ENCODE measurements at regions of chr14 and their contacts with region 1.

Region 1: DNA sequence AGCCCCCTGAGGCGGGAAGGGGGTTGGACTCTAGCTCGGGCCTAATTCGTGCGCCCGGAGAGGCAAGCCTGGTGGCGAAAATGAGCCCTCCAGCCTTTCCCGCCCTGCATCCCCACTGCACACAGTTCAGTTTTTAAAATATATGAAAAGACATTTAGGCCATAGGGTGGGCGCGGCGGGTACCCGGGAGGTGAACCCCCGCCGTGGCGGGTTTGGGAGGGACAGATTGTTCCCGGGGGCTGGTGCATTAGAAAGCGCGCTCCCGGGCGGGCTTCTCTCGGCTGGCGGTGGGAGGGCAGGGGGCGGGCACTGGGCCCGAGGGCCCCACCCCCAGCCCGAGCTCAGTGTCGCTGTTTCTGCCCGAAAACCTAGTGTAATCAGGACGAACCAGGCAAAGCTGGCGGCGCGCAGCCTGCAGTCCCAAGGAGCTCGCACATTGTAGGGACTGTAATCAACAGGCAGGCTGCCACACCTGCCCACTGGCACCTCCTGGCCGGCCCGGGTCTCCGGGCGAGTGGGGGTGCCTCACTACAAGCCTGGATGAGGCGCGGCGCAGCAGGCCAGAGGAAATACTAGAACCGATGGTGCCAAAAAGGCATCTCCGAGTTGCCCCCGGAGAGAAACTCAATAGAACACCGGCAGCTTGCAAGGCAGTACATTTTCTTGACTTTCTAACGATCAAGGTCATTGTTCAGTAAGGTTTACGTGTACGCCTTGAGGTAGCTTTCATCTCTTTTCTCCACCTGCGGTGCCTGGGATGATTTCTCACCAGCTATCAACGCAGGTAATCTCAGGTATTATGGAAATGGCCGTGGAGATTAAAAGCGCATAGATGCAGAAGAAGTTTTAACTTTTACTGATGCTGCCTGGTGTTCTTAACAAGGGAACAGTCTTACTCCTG is 764 bp upstream of the SPTB start:
- DNase-seq: peak; percentile 51 to 70
- H3K4me3 ChIP-seq: peak overlapping the region; percentile 61
- H3K4me3 Mint-ChIP-seq: peak overlapping the region; percentile 82
- H3K27ac Mint-ChIP-seq: no peak overlapping the region
- H3K4me1 ChIP-seq: no peaks in the 10 kb centered on the region
- H3K4me1 Mint-ChIP-seq: no peaks in the 10 kb centered on the region
- H3K27me3 ChIP-seq: 0 out of 2 replicates have a peak, but pooled peaks cover 1% of the 10 kb centered on the region
- H3K27me3 Mint-ChIP-seq: peaks cover 31% of the 10 kb centered on the region
- CTCF ChIP-seq: peak in 1 of 2 experiments; percentile 11

Region 2: DNA sequence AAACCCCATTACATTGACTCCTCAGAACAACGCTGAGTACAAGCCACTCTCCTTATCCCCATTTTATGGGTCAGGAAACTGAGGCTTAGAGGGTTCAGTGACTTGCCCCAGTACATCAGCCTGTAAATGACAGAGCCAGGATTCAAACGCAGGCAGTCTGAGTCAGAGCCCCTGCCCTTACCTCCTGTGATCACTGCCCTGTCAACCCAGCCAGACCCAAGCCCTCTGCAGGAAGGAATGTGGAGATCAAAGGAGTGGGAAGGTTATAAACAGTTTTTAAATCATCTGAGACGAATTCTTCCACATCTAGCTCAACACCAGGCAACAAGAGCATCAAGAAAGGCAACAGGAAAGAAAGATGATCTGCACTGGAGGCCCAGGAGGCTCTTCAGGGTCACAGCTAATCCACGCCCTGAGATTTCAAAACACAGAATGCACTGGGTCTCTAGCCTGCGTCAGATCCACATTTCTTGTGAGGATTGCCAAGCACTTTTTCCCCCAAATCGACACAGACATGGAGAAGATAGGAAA is 39.3 kb before region 1 on chr14:
- CTCF ChIA-PET with region 1: no interaction called
- POLR2A ChIA-PET with region 1: interaction called, 3 read pairs
- intact Hi-C with region 1: loop called (anchors 5 kb)
- DNase-seq: peak; percentile 73 to 77
- H3K4me3 ChIP-seq: no peak overlapping the region
- H3K4me3 Mint-ChIP-seq: no peak overlapping the region
- H3K27ac Mint-ChIP-seq: no peak overlapping the region
- H3K4me1 ChIP-seq: 0 out of 2 replicates have a peak, but pooled peaks cover 5% of the 10 kb centered on the region
- H3K4me1 Mint-ChIP-seq: peaks cover 7% of the 10 kb centered on the region
- H3K27me3 ChIP-seq: no peaks in the 10 kb centered on the region
- H3K27me3 Mint-ChIP-seq: peaks cover 6% of the 10 kb centered on the region
- CTCF ChIP-seq: peak; percentile 67 to 70

Region 3: DNA sequence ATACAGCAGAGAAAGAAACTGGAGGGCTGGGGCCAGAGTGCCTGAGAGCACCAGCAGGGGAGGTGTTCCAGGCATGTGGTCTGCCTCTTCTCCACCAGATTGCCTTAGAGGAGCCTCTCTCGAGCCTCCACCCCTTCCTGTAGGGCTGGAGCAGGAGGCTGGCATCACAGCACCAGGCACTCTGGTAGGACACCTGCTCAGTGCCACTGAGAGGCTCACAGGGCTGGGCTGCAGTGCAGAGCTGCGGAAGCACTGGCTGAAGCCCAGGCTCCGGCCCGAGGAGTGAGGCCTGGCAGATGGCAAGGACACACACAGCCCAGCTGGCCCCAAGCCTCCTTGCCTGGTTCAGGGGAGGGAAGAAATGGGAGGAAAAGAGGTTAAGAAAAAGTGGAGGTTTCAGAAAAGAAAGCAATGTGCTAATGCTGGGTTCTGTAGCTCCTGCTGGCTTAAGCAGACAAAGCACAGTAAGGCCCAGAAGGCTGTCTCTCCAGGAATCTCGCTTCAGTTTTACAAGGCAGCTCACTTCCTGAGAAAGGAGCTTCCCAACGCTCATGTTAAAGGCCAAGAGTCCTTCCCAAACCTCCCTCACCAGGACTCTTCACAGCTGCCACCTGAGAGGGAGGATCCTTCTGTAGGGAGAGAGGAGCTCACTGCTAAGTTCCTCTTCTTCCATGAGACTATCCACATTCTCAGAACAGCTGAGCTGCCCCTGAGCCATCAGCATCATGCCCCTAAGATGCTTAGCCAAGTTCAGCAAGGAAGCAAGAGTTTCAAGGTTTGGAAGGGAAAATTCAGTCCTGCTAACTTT is 24.5 kb before region 1 on chr14:
- CTCF ChIA-PET with region 1: no interaction called
- POLR2A ChIA-PET with region 1: no interaction called
- intact Hi-C with region 1: no loop called
- DNase-seq: no peak
- H3K4me3 ChIP-seq: no peak overlapping the region
- H3K4me3 Mint-ChIP-seq: no peak overlapping the region
- H3K27ac Mint-ChIP-seq: no peak overlapping the region
- H3K4me1 ChIP-seq: no peaks in the 10 kb centered on the region
- H3K4me1 Mint-ChIP-seq: peaks cover 6% of the 10 kb centered on the region
- H3K27me3 ChIP-seq: no peaks in the 10 kb centered on the region
- H3K27me3 Mint-ChIP-seq: peaks cover 8% of the 10 kb centered on the region
- CTCF ChIP-seq: no peak

Region 4: GRCh38 chr14:65080960-65081747 is 200.7 kb after region 1 on chr14:
- CTCF ChIA-PET with region 1: no interaction called
- POLR2A ChIA-PET with region 1: no interaction called
- intact Hi-C with region 1: no loop called
- DNase-seq: peak; percentile 68 to 81
- H3K4me3 ChIP-seq: no peak overlapping the region
- H3K4me3 Mint-ChIP-seq: no peak overlapping the region
- H3K27ac Mint-ChIP-seq: peak overlapping the region; percentile 2
- H3K4me1 ChIP-seq: peaks cover 11% of the 10 kb centered on the region; the same call in 1 of the 2 replicates
- H3K4me1 Mint-ChIP-seq: no peaks in the 10 kb centered on the region
- H3K27me3 ChIP-seq: no peaks in the 10 kb centered on the region
- H3K27me3 Mint-ChIP-seq: no peaks in the 10 kb centered on the region
- CTCF ChIP-seq: no peak